CD14-positive monocyte (primary cell): ENCODE measurements at regions of chr5 and their contacts with region 1.

Region 1: DNA sequence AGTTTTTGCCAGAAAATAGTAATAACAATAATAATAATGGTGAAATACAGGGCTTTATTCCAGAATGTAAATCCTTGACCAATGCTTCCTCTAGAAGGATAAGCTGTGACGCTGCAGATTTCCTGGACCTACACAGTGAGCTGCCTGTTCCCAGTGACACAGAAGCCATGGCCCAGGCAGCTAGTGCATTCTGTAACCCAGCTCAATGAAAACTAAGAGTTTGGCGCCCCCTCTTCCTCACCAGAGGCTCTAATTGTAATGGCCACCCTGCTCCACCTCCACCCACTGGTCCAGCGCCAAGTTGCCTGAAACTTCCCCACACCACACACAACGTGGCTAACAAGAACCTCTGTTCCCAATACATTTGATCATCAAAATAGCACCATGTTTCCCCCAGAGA is 248.1 kb downstream of the CETN3 start:
- DNase-seq: peak; percentile 11 to 29 (median 29)
- H3K4me3 ChIP-seq: no peak overlapping the region
- H3K4me3 Mint-ChIP-seq: peak overlapping the region in 1 of 2 donors; percentile 17
- H3K27ac ChIP-seq: no peak overlapping the region
- H3K27ac Mint-ChIP-seq: no peak overlapping the region
- H3K4me1 ChIP-seq: no peaks in the 10 kb centered on the region
- H3K4me1 Mint-ChIP-seq: no peaks in the 10 kb centered on the region
- H3K27me3 ChIP-seq: no peaks in the 10 kb centered on the region
- H3K27me3 Mint-ChIP-seq: peaks cover 0 to 5% (median 0%) of the 10 kb centered on the region in 3 donors
- CTCF ChIP-seq: peak; percentile 7

Region 2: DNA sequence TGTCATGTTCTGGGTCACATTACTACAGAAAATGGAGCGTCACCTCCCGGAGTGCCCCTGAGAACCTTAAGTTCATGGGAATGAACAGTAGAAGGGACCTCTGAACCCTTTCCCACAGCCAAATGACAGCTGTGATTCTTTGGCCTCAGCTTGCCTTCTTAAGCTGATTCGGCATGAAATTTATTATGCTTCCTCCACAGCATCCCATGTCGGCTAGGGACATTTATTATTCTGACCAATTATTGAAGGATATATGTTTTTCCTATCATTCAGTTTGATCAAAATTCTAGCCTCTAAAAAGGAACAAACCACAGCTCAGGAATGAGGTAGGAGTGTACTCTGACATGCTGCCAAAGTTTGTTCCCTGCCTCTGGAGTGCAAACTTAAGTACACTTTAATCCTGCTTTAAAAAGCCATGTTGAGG is 192.4 kb before region 1 on chr5:
- intact Hi-C with region 1: loop called in 1 of 2 experiments (anchors 10 kb)
- DNase-seq: no peak
- H3K4me3 ChIP-seq: no peak overlapping the region
- H3K4me3 Mint-ChIP-seq: no peak overlapping the region
- H3K27ac ChIP-seq: no peak overlapping the region
- H3K27ac Mint-ChIP-seq: no peak overlapping the region
- H3K4me1 ChIP-seq: peaks cover 2 to 8% of the 10 kb centered on the region in 2 donors
- H3K4me1 Mint-ChIP-seq: peaks cover 8% of the 10 kb centered on the region
- H3K27me3 ChIP-seq: no peaks in the 10 kb centered on the region
- H3K27me3 Mint-ChIP-seq: no peaks in the 10 kb centered on the region
- CTCF ChIP-seq: no peak